T-cell (primary cell): ENCODE measurements at regions of chr17 and their contacts with region 1.

Region 1: GRCh38 chr17:47663912-47664625 is 14.3 kb downstream of the KPNB1 start:
- DNase-seq: peak; percentile 13 to 84 (median 51)
- ATAC-seq: peak; percentile 59 to 71 (median 66)
- H3K4me3 ChIP-seq: no peak overlapping the region
- H3K4me3 Mint-ChIP-seq: peak overlapping the region in 1 of 3 donors; percentile 6
- H3K27ac ChIP-seq: peak overlapping the region; percentile 37
- H3K27ac Mint-ChIP-seq: peak overlapping the region; percentile 80 to 87
- H3K4me1 ChIP-seq: peaks cover 10 to 20% of the 10 kb centered on the region in 2 experiments
- H3K4me1 Mint-ChIP-seq: peaks cover 19 to 29% (median 24%) of the 10 kb centered on the region in 3 donors
- H3K27me3 ChIP-seq: no peaks in the 10 kb centered on the region
- H3K27me3 Mint-ChIP-seq: no peaks in the 10 kb centered on the region

Region 2: GRCh38 chr17:47649153-47649971 is 14.7 kb before region 1 on chr17 and contains the start of gene KPNB1:
- CTCF ChIA-PET with region 1: interaction called, 3 to 15 read pairs
- POLR2A ChIA-PET with region 1: interaction called, 10 to 11 read pairs
- DNase-seq: peak; percentile 94 to 99 (median 96)
- ATAC-seq: peak; percentile 80 to 84 (median 83)
- H3K4me3 ChIP-seq: peak within 1 kb of the TSS; percentile 74 to 87
- H3K4me3 Mint-ChIP-seq: peak within 1 kb of the TSS; percentile 87 to 100 (median 91)
- H3K27ac ChIP-seq: peak within 1 kb of the TSS; percentile 66
- H3K27ac Mint-ChIP-seq: peak within 1 kb of the TSS; percentile 95 to 100
- H3K4me1 ChIP-seq: peaks cover 15 to 31% of the 10 kb centered on the region in 2 experiments
- H3K4me1 Mint-ChIP-seq: peaks cover 46 to 55% (median 47%) of the 10 kb centered on the region in 3 donors
- H3K27me3 ChIP-seq: no peaks in the 10 kb centered on the region
- H3K27me3 Mint-ChIP-seq: no peaks in the 10 kb centered on the region
- total RNA-seq, gene KPNB1: 216 to 262 (median 240) TPM